A549 (cell line): ENCODE measurements at regions of chr2 and their contacts with region 1.

Region 1: DNA sequence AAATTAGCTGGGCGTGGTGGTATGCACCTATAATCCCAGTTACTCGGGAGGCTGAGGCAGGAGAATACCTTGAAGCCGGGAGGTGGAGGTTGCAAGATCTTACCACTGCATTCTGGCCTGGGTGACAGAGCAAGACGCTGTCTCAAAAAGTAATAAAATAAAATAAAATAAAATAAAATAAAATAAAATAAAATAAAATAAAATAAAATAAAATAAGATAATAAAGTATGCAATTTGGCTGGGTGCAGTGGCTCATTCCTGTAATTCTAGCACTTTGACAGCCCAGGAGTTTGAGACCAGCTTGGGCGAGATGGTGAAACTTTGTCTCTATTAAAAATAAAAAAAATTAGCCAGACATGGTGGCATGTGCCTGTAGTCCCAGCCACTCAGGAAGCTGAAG is 85.6 kb upstream of the XPO1 start:
- DNase-seq: no peak
- ATAC-seq: no peak
- H3K4me3 ChIP-seq: no peak overlapping the region
- H3K27ac ChIP-seq: no peak overlapping the region
- H3K4me1 ChIP-seq: peaks cover 20% of the 10 kb centered on the region
- CTCF ChIP-seq: no peak
- EP300 ChIP-seq: no peak
- POLR2A ChIP-seq: no peak
- RAD21 ChIP-seq: no peak

Region 2: DNA sequence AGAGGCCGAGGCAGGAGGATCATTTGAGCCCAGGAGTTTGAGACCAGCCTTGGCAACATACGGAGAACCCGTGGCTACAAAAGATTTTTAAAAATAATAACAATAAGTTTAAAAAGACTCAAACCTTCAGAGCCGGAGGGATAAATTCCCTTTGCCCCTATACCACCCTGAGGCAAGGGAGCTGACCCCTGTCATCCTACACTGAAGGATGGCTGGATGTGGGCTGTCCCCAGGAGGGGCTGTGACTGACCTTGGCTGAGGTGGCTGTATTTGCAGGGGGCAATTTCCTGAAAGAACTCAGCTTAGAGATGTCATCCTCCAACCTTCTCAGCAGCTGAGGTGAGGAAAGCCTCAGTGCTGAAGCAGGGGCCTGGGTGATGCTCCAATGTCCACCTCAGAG is 14.0 kb after region 1 on chr2:
- CTCF ChIA-PET with region 1: interaction called, 20 read pairs
- POLR2A ChIA-PET with region 1: no interaction called
- DNase-seq: no peak
- ATAC-seq: no peak
- H3K4me3 ChIP-seq: no peak overlapping the region
- H3K27ac ChIP-seq: no peak overlapping the region
- H3K4me1 ChIP-seq: peaks cover 17% of the 10 kb centered on the region
- CTCF ChIP-seq: no peak
- EP300 ChIP-seq: no peak
- POLR2A ChIP-seq: no peak
- RAD21 ChIP-seq: no peak

Region 3: GRCh38 chr2:61943251-61943650 is 319.5 kb after region 1 on chr2:
- CTCF ChIA-PET with region 1: no interaction called
- POLR2A ChIA-PET with region 1: no interaction called
- DNase-seq: no peak
- ATAC-seq: no peak
- H3K4me3 ChIP-seq: no peak overlapping the region
- H3K27ac ChIP-seq: no peak overlapping the region
- H3K4me1 ChIP-seq: peaks cover 32% of the 10 kb centered on the region
- CTCF ChIP-seq: no peak
- EP300 ChIP-seq: no peak
- POLR2A ChIP-seq: no peak
- RAD21 ChIP-seq: no peak

Region 4: DNA sequence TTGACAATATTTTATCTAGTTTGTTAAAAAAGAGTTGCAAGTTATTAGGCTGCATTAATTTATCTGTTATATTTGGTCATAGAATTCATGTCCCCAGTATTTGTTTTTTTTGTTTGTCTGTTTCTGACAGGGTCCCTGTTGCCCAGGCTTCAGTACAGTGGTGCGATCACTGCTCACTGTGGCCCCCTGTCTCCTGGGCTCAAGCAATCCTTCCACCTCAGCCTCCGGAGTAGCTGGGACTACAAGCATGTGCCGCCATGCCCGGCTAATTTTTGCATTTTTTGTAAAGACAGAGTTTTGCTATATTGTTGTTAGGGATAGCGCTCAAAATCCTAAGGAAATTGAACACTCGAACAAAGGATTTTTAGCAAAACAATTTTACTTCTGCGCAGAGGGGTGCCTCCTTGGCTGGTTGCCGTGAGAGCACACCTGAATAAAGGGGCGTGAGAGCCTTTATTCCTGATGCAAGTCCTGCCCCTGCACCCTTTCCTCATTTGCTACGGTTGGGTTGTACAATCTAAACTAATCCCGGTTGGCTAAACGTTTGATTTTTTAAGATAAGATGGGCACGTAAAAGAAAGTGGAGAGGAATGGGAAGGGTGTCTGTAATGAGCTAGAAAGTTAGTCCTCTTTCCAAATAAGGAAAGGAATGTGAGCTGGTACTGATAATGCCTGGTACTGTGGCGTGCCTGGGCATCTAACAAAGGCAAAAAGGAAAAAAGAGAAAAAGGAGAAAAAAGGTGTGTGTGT is 347.2 kb after region 1 on chr2:
- CTCF ChIA-PET with region 1: no interaction called
- POLR2A ChIA-PET with region 1: no interaction called
- DNase-seq: no peak
- ATAC-seq: peak in 1 of 2 experiments; percentile 60; a peak in 1 of 6 replicates
- H3K4me3 ChIP-seq: no peak overlapping the region
- H3K27ac ChIP-seq: no peak overlapping the region
- H3K4me1 ChIP-seq: no peaks in the 10 kb centered on the region
- CTCF ChIP-seq: no peak
- EP300 ChIP-seq: no peak
- POLR2A ChIP-seq: no peak
- RAD21 ChIP-seq: no peak